Posterior cingulate gyrus (tissue), 11 donors: ENCODE measurements at regions of chr1 and their contacts with region 1.

Region 1: DNA sequence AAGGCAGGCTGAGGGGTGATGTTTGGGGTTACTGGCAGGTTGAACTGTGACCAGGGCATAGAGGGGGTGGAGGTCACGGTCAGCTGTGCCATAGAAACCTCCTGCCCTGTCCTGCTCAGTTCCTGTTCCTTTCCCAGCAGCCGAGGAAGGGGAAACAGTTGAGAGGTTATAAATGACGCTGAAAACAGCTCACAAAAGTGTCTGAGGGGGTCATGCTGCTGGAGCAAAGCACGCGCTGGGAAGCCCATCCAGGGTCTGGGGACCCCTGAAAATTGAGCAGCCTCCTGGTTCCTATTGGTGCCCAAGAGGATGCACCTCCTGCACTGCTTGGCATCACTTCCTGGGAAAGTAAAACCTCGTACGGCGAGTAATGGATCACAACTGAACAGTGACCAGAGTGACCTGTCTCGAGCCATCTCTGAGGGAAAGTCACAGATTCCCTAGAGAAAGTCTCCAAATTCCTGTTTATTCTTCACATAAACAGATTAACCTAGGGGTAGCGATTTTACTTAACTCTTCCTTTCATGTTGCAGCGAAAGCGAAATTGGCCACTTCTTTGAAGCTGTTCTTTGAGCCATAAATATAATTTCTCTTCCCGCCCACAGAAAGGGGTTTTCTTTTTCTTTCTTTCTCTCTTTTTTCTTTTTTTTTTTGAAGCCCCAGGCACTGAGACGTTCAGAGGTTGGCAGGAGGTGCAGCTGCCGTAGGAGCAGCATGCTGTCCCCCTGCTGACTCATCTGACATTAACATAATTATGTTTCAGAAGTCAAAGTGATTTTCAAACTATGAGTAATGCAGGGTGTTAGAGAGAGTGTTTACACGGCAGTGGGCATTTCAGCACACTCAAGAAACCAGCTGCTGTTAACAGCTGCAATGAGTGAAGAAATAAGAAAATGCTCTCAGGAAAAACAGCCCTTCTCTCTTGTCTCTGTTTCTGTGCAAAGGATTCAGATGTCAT is 41.8 kb upstream of the ATF3 start:
- DNase-seq: peak in 1 of 10 donors; percentile 22

Region 2: GRCh38 chr1:212302745-212303383 is 263.9 kb before region 1 on chr1:
- intact Hi-C with region 1: no loop called
- DNase-seq: no peak

Region 3: DNA sequence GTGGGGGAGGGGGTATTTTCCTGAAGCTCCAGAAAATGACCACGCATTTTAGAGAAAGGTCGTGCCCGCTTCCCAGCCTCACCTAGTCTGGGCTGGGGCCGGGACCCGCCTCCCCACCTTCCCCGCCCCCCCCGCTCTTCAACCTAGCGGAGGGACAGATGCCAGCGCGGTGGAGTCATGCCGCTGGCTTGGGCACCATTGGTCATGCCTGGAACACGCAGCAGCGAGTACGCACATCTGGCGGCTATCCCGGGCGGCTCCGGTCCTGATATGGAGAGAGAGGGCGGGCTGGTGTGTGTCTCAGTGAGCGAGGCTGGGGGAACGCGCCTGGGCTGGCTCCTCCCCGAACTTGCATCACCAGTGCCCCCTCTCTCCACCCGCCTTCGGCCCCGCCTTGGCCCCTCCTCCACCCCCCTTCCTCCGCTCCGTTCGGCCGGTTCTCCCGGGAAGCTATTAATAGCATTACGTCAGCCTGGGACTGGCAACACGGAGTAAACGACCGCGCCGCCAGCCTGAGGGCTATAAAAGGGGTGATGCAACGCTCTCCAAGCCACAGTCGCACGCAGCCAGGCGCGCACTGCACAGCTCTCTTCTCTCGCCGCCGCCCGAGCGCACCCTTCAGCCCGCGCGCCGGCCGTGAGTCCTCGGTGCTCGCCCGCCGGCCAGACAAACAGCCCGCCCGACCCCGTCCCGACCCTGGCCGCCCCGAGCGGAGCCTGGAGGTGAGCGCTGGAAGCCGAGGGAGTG is 41.6 kb after region 1 on chr1 and contains the start of gene ATF3:
- intact Hi-C with region 1: loop called (anchors 5 kb)
- DNase-seq: peak; percentile 95 to 100 (median 98)